Activated B cell treated with CpG ODN at 0.5 μM for 24 hours (primary cell): ENCODE measurements at regions of chr12 and their contacts with region 1.

Region 1: GRCh38 chr12:71663561-71664294 is at the start of gene ZFC3H1:
- DNase-seq: peak; percentile 80
- ATAC-seq: peak; percentile 83
- H3K4me3 Mint-ChIP-seq: peak within 1 kb of the TSS; percentile 98
- H3K27ac Mint-ChIP-seq: peak within 1 kb of the TSS; percentile 98
- H3K4me1 Mint-ChIP-seq: peaks cover 55% of the 10 kb centered on the region
- H3K27me3 Mint-ChIP-seq: no peaks in the 10 kb centered on the region
- CTCF ChIP-seq: no peak
- total RNA-seq, gene ZFC3H1: 85.7 and 107 TPM in 2 replicates

Region 2: GRCh38 chr12:71626098-71626497 is 37.6 kb before region 1 on chr12:
- CTCF ChIA-PET with region 1: no interaction called
- POLR2A ChIA-PET with region 1: interaction called, 6 read pairs
- intact Hi-C with region 1: loop called (anchors 5 kb)
- DNase-seq: no peak
- ATAC-seq: peak; percentile 58
- H3K4me3 Mint-ChIP-seq: no peak overlapping the region
- H3K27ac Mint-ChIP-seq: peak overlapping the region; percentile 67
- H3K4me1 Mint-ChIP-seq: peaks cover 21% of the 10 kb centered on the region
- H3K27me3 Mint-ChIP-seq: no peaks in the 10 kb centered on the region
- CTCF ChIP-seq: no peak

Region 3: DNA sequence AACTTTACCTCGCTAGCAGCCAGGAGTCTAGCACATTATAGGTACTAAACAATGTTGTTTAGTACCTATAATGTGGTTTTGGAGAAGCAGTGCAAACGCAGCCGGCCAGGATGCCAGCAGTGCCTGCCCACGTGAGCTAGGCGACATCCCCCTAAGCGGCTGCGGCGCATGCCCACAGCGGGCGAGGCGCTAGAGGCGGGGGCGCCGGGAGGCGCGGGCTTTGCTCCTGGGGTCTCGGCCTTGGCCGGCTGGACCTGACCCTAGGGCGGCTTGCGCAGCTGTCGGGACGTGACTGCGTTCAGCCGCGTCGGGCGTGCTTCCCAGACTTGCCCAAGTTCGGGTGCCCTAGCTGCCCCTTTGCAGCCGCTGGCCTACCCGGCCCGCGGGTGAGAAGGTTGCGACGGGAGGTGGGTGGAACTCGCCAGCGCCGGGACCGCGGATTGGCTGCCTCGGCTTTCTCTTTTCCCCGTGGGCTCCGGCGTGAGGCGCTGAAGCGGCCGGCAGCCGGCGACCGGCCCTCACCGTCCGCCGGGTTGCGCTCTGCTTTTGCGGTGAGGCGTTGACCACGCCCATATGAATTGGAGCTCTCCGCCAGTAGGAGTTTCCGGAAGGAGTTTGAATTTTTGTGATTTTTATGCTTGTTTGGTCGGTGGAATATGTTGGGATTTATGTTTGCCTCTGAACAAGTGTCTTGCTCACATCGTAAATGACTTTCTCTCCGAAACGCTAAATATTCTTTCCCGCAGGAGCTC is 22.4 kb after region 1 on chr12 and contains the start of gene TMEM19:
- CTCF ChIA-PET with region 1: interaction called, 52 read pairs
- POLR2A ChIA-PET with region 1: interaction called, 232 read pairs
- intact Hi-C with region 1: loop called (anchors 1 kb)
- DNase-seq: peak; percentile 87
- ATAC-seq: peak; percentile 87
- H3K4me3 Mint-ChIP-seq: peak within 1 kb of the TSS; percentile 93
- H3K27ac Mint-ChIP-seq: peak within 1 kb of the TSS; percentile 97
- H3K4me1 Mint-ChIP-seq: peaks cover 56% of the 10 kb centered on the region
- H3K27me3 Mint-ChIP-seq: no peaks in the 10 kb centered on the region
- CTCF ChIP-seq: no peak
- total RNA-seq, gene TMEM19: 42.6 and 46.7 TPM in 2 replicates

Region 4: DNA sequence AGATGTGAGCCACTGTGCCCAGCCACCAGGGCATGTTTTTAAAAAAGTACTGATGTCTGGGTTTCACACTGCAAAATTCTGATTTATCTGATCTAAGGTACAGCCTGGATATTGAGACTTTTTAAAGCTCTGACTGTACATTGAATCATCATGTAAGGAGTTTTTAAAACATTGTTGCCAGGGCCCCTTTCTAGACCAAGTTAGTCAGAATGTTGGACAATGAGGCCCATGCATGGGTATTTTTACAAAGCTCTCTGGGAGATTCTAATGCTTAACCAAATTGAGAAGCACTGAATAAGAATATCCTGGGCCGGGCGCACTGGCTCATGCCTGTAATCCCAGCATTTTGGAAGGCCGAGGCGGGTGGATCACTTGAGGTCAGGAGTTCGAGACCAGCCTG is 38.9 kb after region 1 on chr12:
- CTCF ChIA-PET with region 1: interaction called, 20 read pairs
- POLR2A ChIA-PET with region 1: interaction called, 67 read pairs
- intact Hi-C with region 1: loop called (anchors 1 kb)
- DNase-seq: no peak
- ATAC-seq: no peak
- H3K4me3 Mint-ChIP-seq: no peak overlapping the region
- H3K27ac Mint-ChIP-seq: no peak overlapping the region
- H3K4me1 Mint-ChIP-seq: peaks cover 27% of the 10 kb centered on the region
- H3K27me3 Mint-ChIP-seq: no peaks in the 10 kb centered on the region
- CTCF ChIP-seq: no peak

Region 5: GRCh38 chr12:71754461-71755145 is 90.9 kb after region 1 on chr12 and contains the start of gene RAB21:
- CTCF ChIA-PET with region 1: interaction called, 4 read pairs
- POLR2A ChIA-PET with region 1: interaction called, 59 read pairs
- intact Hi-C with region 1: loop called (anchors 1 kb)
- DNase-seq: peak; percentile 95
- ATAC-seq: peak; percentile 84
- H3K4me3 Mint-ChIP-seq: peak within 1 kb of the TSS; percentile 96
- H3K27ac Mint-ChIP-seq: peak within 1 kb of the TSS; percentile 97
- H3K4me1 Mint-ChIP-seq: peaks cover 43% of the 10 kb centered on the region
- H3K27me3 Mint-ChIP-seq: no peaks in the 10 kb centered on the region
- CTCF ChIP-seq: no peak
- total RNA-seq, gene RAB21: 112 and 121 TPM in 2 replicates

Region 6: DNA sequence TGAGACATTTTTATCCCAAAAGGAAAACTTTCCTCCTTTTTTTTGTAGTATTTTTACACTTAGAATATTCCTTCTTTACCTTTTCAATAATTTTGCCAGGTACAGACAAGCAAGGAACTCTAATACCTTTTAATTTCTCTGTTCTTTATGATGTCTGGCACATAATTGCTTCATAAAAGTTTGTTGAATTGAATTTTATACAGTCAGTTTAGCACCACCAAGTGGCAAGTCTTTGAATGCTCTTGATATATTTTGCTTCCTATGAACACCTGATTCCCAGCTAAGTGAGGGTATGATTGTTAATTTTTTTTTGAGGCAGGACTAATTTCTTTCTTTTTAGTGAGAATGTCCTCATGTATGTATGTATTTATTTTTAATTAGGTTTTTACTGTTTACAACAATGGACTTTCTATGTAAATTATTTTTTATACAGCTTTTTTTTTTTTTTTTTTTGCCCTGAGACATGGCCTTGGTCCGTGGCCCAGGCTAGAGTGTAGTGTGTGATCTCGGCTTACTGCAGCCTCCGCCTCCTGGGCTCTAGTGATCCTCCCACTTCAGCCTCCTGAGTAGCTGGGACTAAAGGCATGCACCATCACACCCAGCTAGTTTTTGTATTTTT is 182.7 kb after region 1 on chr12:
- CTCF ChIA-PET with region 1: no interaction called
- POLR2A ChIA-PET with region 1: interaction called, 12 read pairs
- intact Hi-C with region 1: no loop called
- DNase-seq: no peak
- ATAC-seq: no peak
- H3K4me3 Mint-ChIP-seq: no peak overlapping the region
- H3K27ac Mint-ChIP-seq: no peak overlapping the region
- H3K4me1 Mint-ChIP-seq: peaks cover 14% of the 10 kb centered on the region
- H3K27me3 Mint-ChIP-seq: no peaks in the 10 kb centered on the region
- CTCF ChIP-seq: no peak

Region 7: DNA sequence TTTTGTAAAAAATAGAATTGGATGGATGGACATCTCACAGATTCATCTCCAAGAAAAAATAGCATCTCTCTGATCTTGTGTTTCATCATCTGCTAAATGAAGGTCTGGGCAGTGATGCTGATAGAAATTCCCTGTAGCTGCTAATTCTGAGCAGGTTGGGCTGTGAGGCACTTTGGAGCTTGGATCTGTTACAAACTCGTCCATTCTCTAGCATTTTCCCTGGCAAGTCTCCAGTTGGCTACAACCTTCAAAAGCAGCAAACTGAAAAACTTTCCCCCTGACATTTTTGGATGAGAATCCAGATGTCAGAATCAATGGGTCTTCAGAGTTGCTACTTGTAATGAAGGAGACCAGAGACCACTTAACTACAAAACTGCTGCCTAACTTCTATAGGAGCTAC is 347.6 kb after region 1 on chr12:
- CTCF ChIA-PET with region 1: no interaction called
- POLR2A ChIA-PET with region 1: no interaction called
- intact Hi-C with region 1: no loop called
- DNase-seq: no peak
- ATAC-seq: no peak
- H3K4me3 Mint-ChIP-seq: no peak overlapping the region
- H3K27ac Mint-ChIP-seq: no peak overlapping the region
- H3K4me1 Mint-ChIP-seq: no peaks in the 10 kb centered on the region
- H3K27me3 Mint-ChIP-seq: peaks cover 2% of the 10 kb centered on the region
- CTCF ChIP-seq: no peak